PC-9 (cell line): ENCODE measurements at regions of chr11 and their contacts with region 1.

Region 1: DNA sequence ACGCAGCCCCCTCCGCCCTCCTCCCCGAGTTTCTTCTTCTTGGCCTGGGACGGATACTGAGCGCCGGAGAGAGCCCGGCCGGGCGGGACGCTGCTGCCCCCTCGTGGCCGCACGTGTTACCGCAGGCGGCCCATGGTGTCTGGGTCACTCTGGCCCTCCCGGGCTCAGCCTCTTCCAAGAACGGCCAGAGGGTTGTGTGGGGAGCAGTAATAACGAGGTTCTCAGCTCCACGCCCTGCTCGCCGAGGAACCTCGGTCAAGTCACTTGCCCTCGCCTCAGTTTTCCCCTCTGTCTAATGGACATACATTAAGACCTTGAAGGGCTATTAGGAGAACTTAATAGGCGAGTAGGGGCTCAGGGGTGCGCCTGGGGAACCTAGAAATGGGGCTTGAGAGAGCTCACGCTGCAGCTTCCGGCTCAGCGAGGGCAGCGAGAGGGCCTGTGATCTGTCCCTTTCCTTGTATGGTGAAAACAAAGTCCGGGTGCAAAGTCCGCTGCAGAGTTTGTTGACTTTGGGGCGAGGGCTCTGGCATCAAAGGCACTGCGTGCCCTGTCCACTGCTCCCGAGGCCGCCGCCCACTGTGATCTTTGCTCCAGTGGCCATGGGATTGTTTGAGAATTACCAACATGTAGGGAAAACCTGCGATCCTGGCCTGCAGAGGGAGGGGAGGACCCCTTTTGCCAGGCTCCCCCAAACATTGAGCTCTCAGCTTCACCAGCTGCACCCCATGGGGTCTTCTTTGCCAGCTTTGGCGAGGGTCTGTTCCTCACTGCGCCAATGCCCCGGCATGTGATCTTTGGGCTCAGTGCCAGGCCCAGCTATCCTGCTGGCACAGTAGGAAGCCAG is 14.4 kb upstream of the LRP5 start:
- DNase-seq: peak; percentile 58 to 83
- H3K4me3 ChIP-seq: no peak overlapping the region
- H3K27ac ChIP-seq: no peak overlapping the region
- H3K4me1 ChIP-seq: peaks cover 15% of the 10 kb centered on the region
- H3K27me3 ChIP-seq: no peaks in the 10 kb centered on the region
- CTCF ChIP-seq: peak; percentile 98

Region 2: DNA sequence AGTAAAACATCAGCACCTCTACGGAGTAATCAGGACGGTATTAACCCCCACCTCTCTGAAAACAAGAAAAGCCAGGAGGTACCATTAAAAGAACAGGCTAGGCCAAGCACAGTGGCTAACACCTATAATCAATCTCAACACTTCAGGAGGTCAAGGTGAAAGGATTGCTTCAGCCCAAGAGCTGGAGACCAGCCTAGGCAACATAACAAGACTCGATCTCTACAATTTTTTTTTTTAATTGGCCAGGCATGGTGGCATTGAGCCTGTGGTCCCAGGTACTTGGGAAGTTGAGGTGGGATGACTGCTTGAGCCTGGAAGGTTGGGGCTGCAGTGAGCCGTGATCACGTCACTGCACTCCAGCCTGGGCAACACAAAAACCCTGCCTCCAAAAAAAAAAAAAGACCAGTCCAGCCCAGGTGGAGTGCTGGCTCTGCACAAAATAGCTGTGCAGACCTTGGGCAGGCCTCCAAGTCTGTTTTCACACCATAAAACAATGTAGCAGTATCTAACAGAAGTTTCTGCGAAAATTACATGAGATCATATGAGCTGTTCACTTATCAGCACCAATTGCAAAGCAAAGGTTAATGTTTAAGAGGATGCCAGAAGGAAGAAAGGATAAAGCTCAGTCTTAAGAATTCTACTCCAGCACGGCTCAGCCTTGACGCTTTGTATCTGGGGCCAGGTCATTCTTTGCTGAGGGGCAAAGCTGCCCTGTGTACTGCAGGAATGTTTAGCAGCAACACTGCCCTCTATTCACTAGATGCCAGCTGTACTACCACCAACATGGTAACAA is 191.7 kb before region 1 on chr11:
- CTCF ChIA-PET with region 1: interaction called, 11 read pairs
- POLR2A ChIA-PET with region 1: no interaction called
- intact Hi-C with region 1: no loop called
- DNase-seq: no peak
- H3K4me3 ChIP-seq: no peak overlapping the region
- H3K27ac ChIP-seq: peak overlapping the region; percentile 29
- H3K4me1 ChIP-seq: peaks cover 7% of the 10 kb centered on the region; the same call in 1 of the 2 replicates
- H3K27me3 ChIP-seq: no peaks in the 10 kb centered on the region
- CTCF ChIP-seq: no peak

Region 3: DNA sequence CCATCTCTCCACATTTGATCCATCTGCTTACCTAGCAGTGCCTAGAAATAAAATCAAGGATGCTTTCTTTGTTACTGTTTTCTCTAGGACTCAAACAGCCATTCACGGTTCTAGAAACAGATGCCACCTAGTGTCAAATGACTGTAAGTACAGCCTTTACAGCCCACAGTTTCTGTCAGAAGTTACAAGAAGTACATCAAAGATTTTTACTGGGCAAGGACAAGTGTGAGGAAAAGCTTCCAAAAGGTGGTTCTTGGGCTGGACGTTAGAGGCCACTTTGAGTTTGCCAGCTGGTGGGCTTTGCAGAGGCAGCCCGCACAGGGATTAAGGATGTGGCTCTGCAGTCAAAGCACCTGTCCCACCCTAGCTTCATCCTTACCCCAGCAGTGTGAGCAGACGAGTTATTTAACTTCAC is 91.8 kb before region 1 on chr11:
- CTCF ChIA-PET with region 1: interaction called, 6 read pairs
- POLR2A ChIA-PET with region 1: no interaction called
- intact Hi-C with region 1: loop called (anchors 5 kb)
- DNase-seq: peak; percentile 34 to 69
- H3K4me3 ChIP-seq: no peak overlapping the region
- H3K27ac ChIP-seq: no peak overlapping the region
- H3K4me1 ChIP-seq: peaks cover 24% of the 10 kb centered on the region
- H3K27me3 ChIP-seq: no peaks in the 10 kb centered on the region
- CTCF ChIP-seq: peak; percentile 94

Region 4: GRCh38 chr11:68257475-68258362 is 40.3 kb before region 1 on chr11:
- CTCF ChIA-PET with region 1: interaction called, 15 read pairs
- POLR2A ChIA-PET with region 1: no interaction called
- intact Hi-C with region 1: loop called (anchors 1 kb)
- DNase-seq: peak; percentile 86 to 96
- H3K4me3 ChIP-seq: no peak overlapping the region
- H3K27ac ChIP-seq: no peak overlapping the region
- H3K4me1 ChIP-seq: no peaks in the 10 kb centered on the region; the same call in 1 of the 2 replicates
- H3K27me3 ChIP-seq: no peaks in the 10 kb centered on the region
- CTCF ChIP-seq: peak; percentile 95

Region 5: GRCh38 chr11:68313574-68314202 is 15.7 kb after region 1 on chr11:
- CTCF ChIA-PET with region 1: interaction called, 14 read pairs
- POLR2A ChIA-PET with region 1: interaction called, 6 read pairs
- intact Hi-C with region 1: no loop called
- DNase-seq: no peak
- H3K4me3 ChIP-seq: peak overlapping the region; percentile 89
- H3K27ac ChIP-seq: peak overlapping the region; percentile 75
- H3K4me1 ChIP-seq: peaks cover 39% of the 10 kb centered on the region
- H3K27me3 ChIP-seq: no peaks in the 10 kb centered on the region
- CTCF ChIP-seq: no peak

Region 6: GRCh38 chr11:68342459-68343158 is 44.6 kb after region 1 on chr11:
- CTCF ChIA-PET with region 1: interaction called, 3 read pairs
- POLR2A ChIA-PET with region 1: no interaction called
- intact Hi-C with region 1: loop called (anchors 5 kb)
- DNase-seq: peak; percentile 96 to 99
- H3K4me3 ChIP-seq: peak overlapping the region; percentile 44; the same call in 1 of the 2 replicates
- H3K27ac ChIP-seq: peak overlapping the region; percentile 89
- H3K4me1 ChIP-seq: peaks cover 74% of the 10 kb centered on the region
- H3K27me3 ChIP-seq: no peaks in the 10 kb centered on the region
- CTCF ChIP-seq: no peak